Activated CD4-positive, alpha-beta memory T cell treated with anti-CD3 and anti-CD28 coated beads for 36 hours (primary cell): ENCODE measurements at regions of chr19 and their contacts with region 1.

Region 1: DNA sequence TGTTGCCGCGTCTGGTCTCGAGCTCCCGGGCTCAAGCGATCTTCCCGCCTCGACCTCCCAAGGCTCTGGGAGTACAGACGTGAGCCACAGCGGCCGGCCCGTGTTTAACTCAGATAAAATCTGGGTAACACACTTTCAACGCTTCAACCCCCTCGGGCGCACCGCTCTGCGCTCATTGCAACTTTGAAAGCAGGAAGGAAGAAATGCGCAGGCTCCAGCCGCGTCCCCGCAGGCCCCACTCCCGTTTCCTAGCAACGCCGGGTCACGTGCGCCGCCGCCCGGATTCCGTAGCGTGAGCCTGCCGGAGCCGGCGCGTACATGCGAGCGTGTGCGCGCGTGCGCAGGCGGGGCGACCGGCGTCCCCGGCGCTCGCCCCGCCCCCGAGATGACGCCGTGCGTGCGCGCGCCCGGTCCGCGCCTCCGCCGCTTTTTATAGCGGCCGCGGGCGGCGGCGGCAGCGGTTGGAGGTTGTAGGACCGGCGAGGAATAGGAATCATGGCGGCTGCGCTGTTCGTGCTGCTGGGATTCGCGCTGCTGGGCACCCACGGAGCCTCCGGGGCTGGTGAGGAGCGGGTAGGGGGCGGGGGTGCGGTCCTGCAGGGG is at the start of gene BSG:
- DNase-seq: peak; percentile 99
- H3K4me3 Mint-ChIP-seq: peak within 1 kb of the TSS; percentile 92
- H3K27ac Mint-ChIP-seq: peak within 1 kb of the TSS; percentile 93
- H3K4me1 Mint-ChIP-seq: peaks cover 35% of the 10 kb centered on the region
- H3K27me3 Mint-ChIP-seq: no peaks in the 10 kb centered on the region
- total RNA-seq, gene BSG: 185 to 205 TPM

Region 2: DNA sequence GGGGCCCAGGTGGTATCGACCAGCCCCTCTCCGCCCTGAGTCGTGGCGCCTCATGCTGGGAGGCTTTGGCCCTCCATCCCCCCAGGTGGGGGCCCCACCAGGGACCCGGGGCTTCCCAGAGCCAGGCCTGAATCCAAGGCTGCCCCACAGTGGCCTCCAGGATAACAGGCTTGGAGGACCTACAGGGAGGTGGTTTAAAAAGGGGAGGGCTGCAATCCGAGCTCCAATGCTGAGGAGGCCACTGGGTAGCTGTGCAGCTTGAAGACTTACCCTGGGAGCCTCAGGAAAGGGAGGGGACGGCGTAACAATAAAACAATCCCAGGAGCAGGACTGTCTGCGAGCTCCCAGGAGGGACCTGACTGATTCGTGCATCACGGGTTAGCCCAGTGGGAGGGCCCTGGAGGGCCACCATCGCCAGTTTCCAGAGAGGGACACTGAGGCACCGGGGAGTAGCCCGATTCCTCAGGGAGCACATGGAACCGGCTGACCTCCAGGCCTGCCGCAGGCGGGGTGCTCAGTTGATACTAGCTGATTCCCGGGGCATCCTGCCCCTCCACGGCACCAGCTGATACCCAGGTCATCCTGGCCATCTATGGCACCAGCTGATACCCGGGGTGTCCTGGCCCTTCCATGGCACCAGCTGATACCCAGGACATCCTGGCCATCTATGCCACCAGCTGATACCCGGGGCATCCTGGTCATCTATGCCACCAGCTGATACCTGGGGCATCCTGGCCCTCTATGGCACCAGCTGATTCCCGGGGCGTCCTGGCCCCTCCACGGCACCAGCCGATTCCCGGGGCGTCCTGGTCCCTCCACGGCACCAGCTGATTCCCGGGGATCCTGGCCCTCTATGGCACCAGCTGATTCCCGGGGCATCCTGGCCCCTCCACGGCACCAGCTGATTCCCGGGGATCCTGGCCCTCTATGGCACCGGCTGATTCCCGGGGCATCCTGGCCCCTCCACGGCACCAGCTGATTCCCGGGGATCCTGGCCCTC is 159.6 kb before region 1 on chr19:
- CTCF ChIA-PET with region 1: no interaction called
- POLR2A ChIA-PET with region 1: no interaction called
- intact Hi-C with region 1: no loop called
- DNase-seq: no peak
- H3K4me3 Mint-ChIP-seq: no peak overlapping the region
- H3K27ac Mint-ChIP-seq: no peak overlapping the region
- H3K4me1 Mint-ChIP-seq: peaks cover 6% of the 10 kb centered on the region
- H3K27me3 Mint-ChIP-seq: peaks cover 9% of the 10 kb centered on the region

Region 3: GRCh38 chr19:531009-531752 is 41.1 kb before region 1 on chr19:
- CTCF ChIA-PET with region 1: interaction called, 3 read pairs
- POLR2A ChIA-PET with region 1: interaction called, 4 read pairs
- intact Hi-C with region 1: loop called (anchors 2 kb)
- DNase-seq: peak; percentile 90
- H3K4me3 Mint-ChIP-seq: peak overlapping the region; percentile 81
- H3K27ac Mint-ChIP-seq: peak overlapping the region; percentile 80
- H3K4me1 Mint-ChIP-seq: peaks cover 12% of the 10 kb centered on the region
- H3K27me3 Mint-ChIP-seq: peaks cover 3% of the 10 kb centered on the region

Region 4: DNA sequence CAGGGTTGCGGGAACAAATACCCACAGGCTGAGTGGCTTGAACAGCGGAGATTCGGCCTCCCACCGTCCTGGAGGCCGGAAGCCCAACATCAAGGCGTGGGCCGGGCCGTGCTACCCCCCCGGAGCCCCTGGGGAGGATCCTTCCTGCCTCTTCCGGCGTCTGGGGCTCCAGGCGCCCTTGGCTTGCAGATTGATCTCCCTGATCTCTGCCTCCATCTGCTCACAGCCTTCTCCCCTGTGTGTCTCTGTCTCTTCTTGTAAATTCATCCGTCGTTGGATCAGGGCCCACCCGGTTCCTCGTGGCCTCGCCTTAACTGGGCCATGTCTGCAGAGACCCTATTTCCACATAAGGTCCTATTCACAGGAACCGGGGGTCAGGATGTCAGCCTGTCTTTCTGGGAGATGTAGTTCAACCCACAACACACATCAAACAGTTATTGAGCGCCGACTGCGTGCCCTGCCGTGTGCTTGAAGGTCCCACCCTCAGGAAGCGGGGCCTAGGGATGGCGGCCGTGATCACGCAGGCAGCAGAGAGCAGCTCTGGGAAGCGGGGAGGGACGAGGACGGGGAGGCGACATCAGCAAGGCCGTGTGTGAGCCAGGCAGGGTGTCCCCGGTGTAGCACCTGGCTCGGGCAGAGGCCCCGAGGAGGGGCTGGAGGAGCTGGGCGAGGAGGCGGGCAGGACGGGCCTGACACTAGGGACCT is 38.7 kb after region 1 on chr19:
- CTCF ChIA-PET with region 1: no interaction called
- POLR2A ChIA-PET with region 1: no interaction called
- intact Hi-C with region 1: loop called (anchors 2 kb)
- DNase-seq: peak; percentile 78
- H3K4me3 Mint-ChIP-seq: peak overlapping the region; percentile 79
- H3K27ac Mint-ChIP-seq: peak overlapping the region; percentile 95
- H3K4me1 Mint-ChIP-seq: peaks cover 26% of the 10 kb centered on the region
- H3K27me3 Mint-ChIP-seq: no peaks in the 10 kb centered on the region

Region 5: GRCh38 chr19:680287-681028 is 108.2 kb after region 1 on chr19:
- CTCF ChIA-PET with region 1: no interaction called
- POLR2A ChIA-PET with region 1: no interaction called
- intact Hi-C with region 1: loop called (anchors 1 kb)
- DNase-seq: peak; percentile 100
- H3K4me3 Mint-ChIP-seq: peak overlapping the region; percentile 79
- H3K27ac Mint-ChIP-seq: peak overlapping the region; percentile 91
- H3K4me1 Mint-ChIP-seq: no peaks in the 10 kb centered on the region
- H3K27me3 Mint-ChIP-seq: peaks cover 4% of the 10 kb centered on the region